ENCODE measurements at regions of chr5 and their contacts with region 1.

Region 1: GRCh38 chr5:157142317-157143126 is at the start of gene MED7:
- DNase-seq: peak; percentile 87
- ATAC-seq: peak; percentile 98
- H3K4me3 Mint-ChIP-seq: peak within 1 kb of the TSS; percentile 86
- H3K27ac Mint-ChIP-seq: peak within 1 kb of the TSS; percentile 96
- H3K4me1 Mint-ChIP-seq: peaks cover 23% of the 10 kb centered on the region
- H3K27me3 Mint-ChIP-seq: no peaks in the 10 kb centered on the region
- total RNA-seq, gene MED7: 15.3 to 15.5 TPM

Region 2: GRCh38 chr5:157116483-157116954 is 26.0 kb before region 1 on chr5:
- POLR2A ChIA-PET with region 1: interaction called, 60 read pairs
- DNase-seq: no peak
- ATAC-seq: peak; percentile 50
- H3K4me3 Mint-ChIP-seq: peak overlapping the region; percentile 69
- H3K27ac Mint-ChIP-seq: peak overlapping the region; percentile 85
- H3K4me1 Mint-ChIP-seq: peaks cover 39% of the 10 kb centered on the region
- H3K27me3 Mint-ChIP-seq: no peaks in the 10 kb centered on the region

Region 3: GRCh38 chr5:157157293-157157891 is 14.9 kb after region 1 on chr5:
- POLR2A ChIA-PET with region 1: interaction called, 30 read pairs
- DNase-seq: no peak
- ATAC-seq: no peak
- H3K4me3 Mint-ChIP-seq: no peak overlapping the region
- H3K27ac Mint-ChIP-seq: peak overlapping the region; percentile 30
- H3K4me1 Mint-ChIP-seq: peaks cover 60% of the 10 kb centered on the region
- H3K27me3 Mint-ChIP-seq: no peaks in the 10 kb centered on the region

Region 4: GRCh38 chr5:157189223-157189622 is 46.7 kb after region 1 on chr5:
- POLR2A ChIA-PET with region 1: interaction called, 29 read pairs
- DNase-seq: no peak
- ATAC-seq: peak; percentile 24
- H3K4me3 Mint-ChIP-seq: peak overlapping the region; percentile 85
- H3K27ac Mint-ChIP-seq: peak overlapping the region; percentile 82
- H3K4me1 Mint-ChIP-seq: peaks cover 73% of the 10 kb centered on the region
- H3K27me3 Mint-ChIP-seq: no peaks in the 10 kb centered on the region

Region 5: GRCh38 chr5:157253547-157253946 is 111.0 kb after region 1 on chr5:
- POLR2A ChIA-PET with region 1: interaction called, 18 read pairs
- DNase-seq: no peak
- ATAC-seq: no peak
- H3K4me3 Mint-ChIP-seq: peak overlapping the region; percentile 60
- H3K27ac Mint-ChIP-seq: peak overlapping the region; percentile 88
- H3K4me1 Mint-ChIP-seq: peaks cover 87% of the 10 kb centered on the region
- H3K27me3 Mint-ChIP-seq: no peaks in the 10 kb centered on the region

Region 6: GRCh38 chr5:157271740-157272271 is 129.3 kb after region 1 on chr5:
- POLR2A ChIA-PET with region 1: interaction called, 31 read pairs
- DNase-seq: peak; percentile 82
- ATAC-seq: peak; percentile 87
- H3K4me3 Mint-ChIP-seq: peak overlapping the region; percentile 93
- H3K27ac Mint-ChIP-seq: peak overlapping the region; percentile 99
- H3K4me1 Mint-ChIP-seq: peaks cover 76% of the 10 kb centered on the region
- H3K27me3 Mint-ChIP-seq: no peaks in the 10 kb centered on the region

Measured in activated naive CD8-positive, alpha-beta T cell treated with anti-CD3 and anti-CD28 coated beads, Interleukin-2, amount 10 ng/mL, durations not matched to agents 7 days and 5 days (primary cell).